MCF 10A (cell line): ENCODE measurements at regions of chr5 and their contacts with region 1.

Region 1: DNA sequence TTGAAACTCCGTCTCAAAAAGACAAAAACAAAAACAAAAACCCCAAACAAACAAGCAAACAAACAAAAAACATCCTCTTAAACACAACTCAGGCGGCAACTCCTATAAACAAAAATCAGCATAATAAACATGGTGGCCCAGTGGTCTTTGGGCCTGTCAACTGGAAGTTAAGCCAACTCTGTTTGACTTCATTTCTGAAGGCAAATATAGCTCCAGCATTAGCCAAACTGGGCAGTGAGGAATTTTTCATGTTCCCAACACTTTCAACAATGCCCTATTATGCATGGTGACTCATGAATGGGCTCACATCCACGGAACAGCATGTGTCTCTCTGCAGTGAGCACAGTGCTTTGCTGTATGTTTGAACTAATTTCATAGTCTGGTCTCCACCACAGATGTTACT is 143.9 kb upstream of the STC2 start:
- DNase-seq: peak; percentile 97
- H3K4me3 Mint-ChIP-seq: peak overlapping the region; percentile 47
- H3K27ac Mint-ChIP-seq: peak overlapping the region; percentile 94
- H3K4me1 Mint-ChIP-seq: peaks cover 51% of the 10 kb centered on the region
- H3K27me3 Mint-ChIP-seq: no peaks in the 10 kb centered on the region
- CTCF ChIP-seq: no peak

Region 2: DNA sequence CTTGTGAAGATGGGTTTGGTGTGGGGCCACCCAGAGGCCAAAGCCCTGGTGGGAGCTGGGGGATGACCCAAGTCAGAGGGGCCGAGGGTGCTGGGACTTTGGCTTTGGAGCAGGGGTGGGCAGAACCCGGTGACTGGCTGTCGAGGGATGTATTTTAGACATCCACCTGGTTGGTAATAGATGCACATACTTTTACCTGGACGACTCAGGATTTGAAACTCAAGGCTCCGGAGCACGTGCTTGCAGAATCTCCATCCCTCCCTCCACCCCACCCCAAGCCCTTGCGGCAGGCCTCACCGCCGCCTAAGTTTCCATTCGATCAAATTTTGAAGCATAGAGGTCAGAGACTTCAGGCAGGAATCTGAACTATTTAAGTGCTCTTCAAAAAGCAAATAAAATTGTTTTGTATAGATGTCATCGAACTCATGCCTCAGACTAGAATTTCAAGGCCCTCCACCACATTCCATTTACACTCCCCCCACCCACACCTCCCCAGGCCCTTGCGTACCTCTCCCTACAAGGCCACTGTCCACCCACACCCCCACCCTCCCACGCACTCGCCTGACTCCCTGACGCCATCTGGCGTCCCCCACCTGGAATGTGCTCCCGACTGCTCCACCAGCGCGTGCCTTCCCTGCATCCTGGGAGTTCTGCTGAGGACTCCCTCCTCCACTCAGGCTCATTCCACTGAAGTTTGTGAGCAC is 569.5 kb before region 1 on chr5:
- CTCF ChIA-PET with region 1: no interaction called
- POLR2A ChIA-PET with region 1: no interaction called
- intact Hi-C with region 1: no loop called
- DNase-seq: peak; percentile 75
- H3K4me3 Mint-ChIP-seq: peak overlapping the region; percentile 45
- H3K27ac Mint-ChIP-seq: peak overlapping the region; percentile 98
- H3K4me1 Mint-ChIP-seq: peaks cover 82% of the 10 kb centered on the region
- H3K27me3 Mint-ChIP-seq: no peaks in the 10 kb centered on the region
- CTCF ChIP-seq: peak; percentile 27

Region 3: GRCh38 chr5:173310861-173311785 is 161.0 kb before region 1 on chr5:
- CTCF ChIA-PET with region 1: no interaction called
- POLR2A ChIA-PET with region 1: no interaction called
- intact Hi-C with region 1: no loop called
- DNase-seq: peak; percentile 52
- H3K4me3 Mint-ChIP-seq: peak overlapping the region; percentile 24
- H3K27ac Mint-ChIP-seq: peak overlapping the region; percentile 70
- H3K4me1 Mint-ChIP-seq: peaks cover 10% of the 10 kb centered on the region
- H3K27me3 Mint-ChIP-seq: no peaks in the 10 kb centered on the region
- CTCF ChIP-seq: no peak

Region 4: DNA sequence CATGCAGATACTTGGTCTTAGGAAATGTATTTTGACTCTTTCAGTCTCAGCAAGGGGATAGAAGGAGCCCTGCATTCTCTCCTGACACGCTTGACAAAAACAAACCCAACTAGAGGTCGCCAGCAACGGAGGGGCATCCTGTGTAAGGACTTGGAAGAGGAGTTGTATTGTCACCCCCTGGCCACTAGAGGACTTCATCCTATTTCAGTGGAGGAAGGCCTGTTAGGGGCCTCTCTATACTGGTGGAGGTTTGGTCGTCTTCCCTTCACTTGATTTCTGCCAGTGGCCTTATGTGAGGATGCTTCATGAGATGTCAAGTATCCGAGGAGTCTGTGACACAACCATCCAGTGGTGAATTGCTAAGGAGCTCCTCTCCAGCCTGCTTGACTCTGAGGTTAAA is 21.1 kb before region 1 on chr5:
- CTCF ChIA-PET with region 1: interaction called, 6 read pairs
- POLR2A ChIA-PET with region 1: interaction called, 20 read pairs
- intact Hi-C with region 1: loop called (anchors 1 kb)
- DNase-seq: peak; percentile 34
- H3K4me3 Mint-ChIP-seq: no peak overlapping the region
- H3K27ac Mint-ChIP-seq: no peak overlapping the region
- H3K4me1 Mint-ChIP-seq: peaks cover 46% of the 10 kb centered on the region
- H3K27me3 Mint-ChIP-seq: no peaks in the 10 kb centered on the region
- CTCF ChIP-seq: peak; percentile 36

Region 5: DNA sequence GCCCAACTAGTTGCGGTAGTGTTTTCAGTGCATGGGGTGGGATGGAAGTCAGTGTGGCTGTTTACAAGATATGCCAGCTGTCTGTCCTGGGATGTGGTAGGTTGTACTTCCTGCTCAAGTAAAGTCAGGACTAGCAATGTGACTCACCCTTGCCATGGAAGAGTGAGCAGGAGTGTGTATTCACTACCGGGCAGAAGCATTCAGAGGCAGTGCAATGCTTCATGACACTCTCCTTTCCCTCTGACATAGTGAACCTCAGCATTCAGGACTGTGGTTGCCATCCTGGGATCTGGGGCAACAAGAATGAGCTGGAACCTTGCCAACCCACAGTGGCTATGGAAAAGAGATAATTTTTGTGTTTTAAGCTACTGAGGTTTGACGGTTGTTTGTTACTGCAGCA is 75.4 kb after region 1 on chr5:
- CTCF ChIA-PET with region 1: no interaction called
- POLR2A ChIA-PET with region 1: no interaction called
- intact Hi-C with region 1: no loop called
- DNase-seq: peak; percentile 22
- H3K4me3 Mint-ChIP-seq: no peak overlapping the region
- H3K27ac Mint-ChIP-seq: no peak overlapping the region
- H3K4me1 Mint-ChIP-seq: no peaks in the 10 kb centered on the region
- H3K27me3 Mint-ChIP-seq: peaks cover 24% of the 10 kb centered on the region
- CTCF ChIP-seq: no peak